ENCODE measurements at regions of chr20 and their contacts with region 1.

Region 1: DNA sequence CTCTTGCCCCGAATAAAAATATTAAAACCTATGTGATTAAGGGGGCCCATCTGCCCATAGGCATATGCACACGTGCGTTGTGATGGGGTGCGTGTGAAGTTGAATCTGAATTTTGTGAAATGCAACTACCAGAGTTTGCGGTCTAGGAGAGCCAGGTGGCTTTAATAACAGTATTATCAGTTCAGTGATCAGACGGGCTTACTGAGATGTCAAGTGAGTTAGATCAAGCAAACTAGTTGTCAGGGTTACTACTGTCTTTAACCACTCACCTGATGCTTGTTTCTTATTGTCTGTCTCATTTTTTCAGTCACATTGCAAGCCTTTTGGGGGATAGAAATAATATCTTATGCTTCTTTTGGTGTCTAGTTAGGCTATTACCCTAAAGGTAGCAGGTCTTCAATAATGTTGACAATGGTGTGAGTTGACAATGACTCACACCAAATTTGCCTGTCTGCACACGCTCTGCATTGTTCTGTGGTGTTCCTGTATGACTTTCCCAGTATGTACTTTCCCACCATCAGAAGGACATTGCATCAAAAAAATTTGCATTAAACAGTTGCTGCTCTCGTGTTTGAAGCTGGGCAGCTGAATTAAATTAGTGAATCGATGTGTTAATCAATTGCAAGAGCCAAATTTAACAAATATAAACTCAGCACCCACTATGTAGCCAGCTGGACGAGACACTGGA is 103.1 kb upstream of the NAA20 start:
- H3K4me3 Mint-ChIP-seq: no peak overlapping the region
- H3K27ac Mint-ChIP-seq: peak overlapping the region; percentile 98
- H3K4me1 Mint-ChIP-seq: peaks cover 84% of the 10 kb centered on the region
- H3K27me3 Mint-ChIP-seq: no peaks in the 10 kb centered on the region

Region 2: GRCh38 chr20:19934792-19935491 is 20.9 kb after region 1 on chr20:
- intact Hi-C with region 1: loop called (anchors 2 kb)
- H3K4me3 Mint-ChIP-seq: peak overlapping the region; percentile 73
- H3K27ac Mint-ChIP-seq: peak overlapping the region; percentile 96
- H3K4me1 Mint-ChIP-seq: peaks cover 91% of the 10 kb centered on the region
- H3K27me3 Mint-ChIP-seq: no peaks in the 10 kb centered on the region